ENCODE measurements at regions of chr2 and their contacts with region 1.

Region 1: GRCh38 chr2:231452799-231453508 is 11.3 kb downstream of the NCL start:
- DNase-seq: peak in 1 of 2 experiments; percentile 65
- H3K4me3 ChIP-seq: no peak overlapping the region
- H3K27ac ChIP-seq: peak overlapping the region; percentile 44; the same call in 1 of the 2 replicates
- H3K4me1 ChIP-seq: peaks cover 0 to 5% (median 2%) of the 10 kb centered on the region in 4 experiments; a peak in 3 of 7 replicates
- H3K27me3 ChIP-seq: no peaks in the 10 kb centered on the region
- CTCF ChIP-seq: no peak
- EP300 ChIP-seq: no peak
- POLR2A ChIP-seq: peak; percentile 52 to 83; a peak in 2 of 3 replicates
- RAD21 ChIP-seq: no peak

Region 2: DNA sequence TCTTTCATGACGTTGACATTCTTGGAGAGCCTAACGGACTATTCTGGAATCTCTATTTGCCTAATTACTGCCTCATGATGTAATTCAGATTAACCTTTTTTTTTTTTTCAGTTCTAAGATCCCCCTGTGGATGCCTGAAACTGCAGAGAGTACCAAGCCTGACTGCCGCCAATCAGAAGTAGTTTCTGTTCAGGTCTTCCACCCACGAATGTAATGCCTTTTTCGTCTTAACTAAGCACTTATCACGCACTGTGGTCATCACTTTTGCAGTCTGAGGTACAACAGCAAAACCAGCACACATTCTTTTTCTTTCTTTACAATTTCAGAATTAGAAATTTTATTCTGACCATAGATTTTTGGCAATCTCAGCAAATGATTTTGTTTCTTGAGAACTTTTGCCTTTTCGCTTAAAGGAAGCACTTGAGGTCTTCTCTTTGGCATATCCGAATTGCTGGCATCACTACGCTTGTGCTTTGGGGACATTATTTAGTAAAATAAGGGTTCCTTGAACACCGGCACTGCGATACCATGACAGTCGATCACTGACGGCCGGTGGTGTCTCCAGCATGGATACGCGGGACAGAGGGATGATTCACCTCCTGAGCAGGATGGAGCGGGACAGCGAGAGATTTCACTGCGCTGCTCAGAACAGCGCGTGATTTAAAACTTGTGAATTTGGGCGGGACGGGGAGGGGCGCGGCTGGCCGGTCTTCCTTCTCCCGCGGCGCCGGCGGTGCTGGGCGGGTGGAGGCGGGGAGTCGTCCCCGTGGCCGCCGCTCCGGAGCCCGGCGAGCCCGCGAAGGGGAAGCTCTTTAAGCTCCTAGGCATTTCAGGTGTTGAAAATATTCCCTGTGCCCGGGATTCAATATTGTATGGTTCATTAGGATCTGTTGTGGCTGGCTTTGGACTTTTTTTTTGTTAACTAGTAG is 495.9 kb before region 1 on chr2:
- CTCF ChIA-PET with region 1: no interaction called
- POLR2A ChIA-PET with region 1: no interaction called
- DNase-seq: peak in 1 of 2 experiments; percentile 60
- H3K4me3 ChIP-seq: peak overlapping the region; percentile 37 to 54 (median 42)
- H3K27ac ChIP-seq: no peak overlapping the region
- H3K4me1 ChIP-seq: peaks cover 0 to 3% (median under 1%) of the 10 kb centered on the region in 4 experiments; a peak in 3 of 7 replicates
- H3K27me3 ChIP-seq: peaks cover 0 to 5% (median 2%) of the 10 kb centered on the region in 4 experiments; a peak in 4 of 7 replicates
- CTCF ChIP-seq: no peak
- EP300 ChIP-seq: no peak
- POLR2A ChIP-seq: peak in 1 of 2 experiments; percentile 31; a peak in 1 of 3 replicates
- RAD21 ChIP-seq: no peak

Region 3: GRCh38 chr2:231353469-231353868 is 99.5 kb before region 1 on chr2:
- CTCF ChIA-PET with region 1: no interaction called
- POLR2A ChIA-PET with region 1: no interaction called
- DNase-seq: no peak
- H3K4me3 ChIP-seq: no peak overlapping the region
- H3K27ac ChIP-seq: no peak overlapping the region
- H3K4me1 ChIP-seq: peaks cover 0 to 6% (median 3%) of the 10 kb centered on the region in 4 experiments; a peak in 6 of 7 replicates
- H3K27me3 ChIP-seq: no peaks in the 10 kb centered on the region
- CTCF ChIP-seq: no peak
- EP300 ChIP-seq: no peak
- POLR2A ChIP-seq: no peak
- RAD21 ChIP-seq: no peak

Region 4: GRCh38 chr2:231394211-231395141 is 58.5 kb before region 1 on chr2:
- CTCF ChIA-PET with region 1: interaction called, 11 read pairs
- POLR2A ChIA-PET with region 1: interaction called, 15 read pairs
- DNase-seq: peak in 1 of 2 experiments; percentile 78
- H3K4me3 ChIP-seq: peak overlapping the region in 2 of 4 experiments; percentile 46 to 74; a peak in 5 of 8 replicates
- H3K27ac ChIP-seq: no peak overlapping the region
- H3K4me1 ChIP-seq: peaks cover 3 to 37% (median 20%) of the 10 kb centered on the region in 4 experiments
- H3K27me3 ChIP-seq: no peaks in the 10 kb centered on the region
- CTCF ChIP-seq: peak in 2 of 3 experiments; percentile 67 to 78; a peak in 3 of 4 replicates
- EP300 ChIP-seq: no peak
- POLR2A ChIP-seq: no peak
- RAD21 ChIP-seq: peak; percentile 58 to 75

Region 5: GRCh38 chr2:231425811-231426728 is 26.9 kb before region 1 on chr2:
- CTCF ChIA-PET with region 1: interaction called, 7 read pairs
- POLR2A ChIA-PET with region 1: interaction called, 235 read pairs
- DNase-seq: peak in 1 of 2 experiments; percentile 47
- H3K4me3 ChIP-seq: no peak overlapping the region
- H3K27ac ChIP-seq: no peak overlapping the region
- H3K4me1 ChIP-seq: peaks cover 0 to 12% (median 0%) of the 10 kb centered on the region in 4 experiments; a peak in 3 of 7 replicates
- H3K27me3 ChIP-seq: no peaks in the 10 kb centered on the region
- CTCF ChIP-seq: no peak
- EP300 ChIP-seq: no peak
- POLR2A ChIP-seq: no peak
- RAD21 ChIP-seq: no peak

Region 6: DNA sequence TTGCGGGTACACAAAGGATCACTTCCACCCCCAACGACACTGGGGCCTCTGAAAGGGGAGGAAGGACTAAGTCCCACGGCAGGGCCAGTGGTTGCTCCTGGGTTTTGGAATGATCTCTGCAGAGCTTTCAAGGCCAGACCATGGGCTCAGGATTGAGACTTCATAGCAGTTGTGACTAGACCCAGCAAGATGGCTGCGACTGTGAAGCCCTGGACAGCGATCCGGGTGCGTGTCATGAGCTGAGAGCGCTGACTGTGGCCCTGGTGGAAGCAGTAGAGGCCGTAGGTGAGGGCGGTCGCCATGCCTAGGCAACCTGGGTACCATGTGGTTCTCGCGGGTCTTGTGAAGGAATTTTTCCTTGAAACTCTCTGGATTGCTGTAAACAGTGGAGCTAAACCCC is 16.0 kb before region 1 on chr2:
- CTCF ChIA-PET with region 1: interaction called, 9 read pairs
- POLR2A ChIA-PET with region 1: interaction called, 97 read pairs
- DNase-seq: no peak
- H3K4me3 ChIP-seq: no peak overlapping the region
- H3K27ac ChIP-seq: no peak overlapping the region
- H3K4me1 ChIP-seq: no peaks in the 10 kb centered on the region
- H3K27me3 ChIP-seq: no peaks in the 10 kb centered on the region
- CTCF ChIP-seq: no peak
- EP300 ChIP-seq: no peak
- POLR2A ChIP-seq: no peak
- RAD21 ChIP-seq: no peak